Motor neuron (in vitro differentiated cells): ENCODE measurements at regions of chr3 and their contacts with region 1.

Region 1: GRCh38 chr3:178966299-178967176 is 105.1 kb downstream of the ZMAT3 start:
- ATAC-seq: peak in 4 of 8 experiments; percentile 20 to 64 (median 32)
- H3K4me3 ChIP-seq: no peak overlapping the region
- H3K27ac ChIP-seq: no peak overlapping the region
- H3K4me1 ChIP-seq: no peaks in the 10 kb centered on the region

Region 2: GRCh38 chr3:178436773-178437172 is 529.8 kb before region 1 on chr3:
- in situ Hi-C with region 1: loop called in 6 of 9 experiments (anchors 10 to 25 kb)
- ATAC-seq: peak in 2 of 8 experiments; percentile 10 to 17
- H3K4me3 ChIP-seq: no peak overlapping the region
- H3K27ac ChIP-seq: no peak overlapping the region
- H3K4me1 ChIP-seq: peaks cover 14 to 17% of the 10 kb centered on the region in 2 donors

Region 3: GRCh38 chr3:180947761-180948633 is 1981.5 kb after region 1 on chr3:
- in situ Hi-C with region 1: no loop called
- ATAC-seq: no peak
- H3K4me3 ChIP-seq: no peak overlapping the region
- H3K27ac ChIP-seq: no peak overlapping the region
- H3K4me1 ChIP-seq: no peaks in the 10 kb centered on the region